WTC11 (cell line): ENCODE measurements at regions of chr4 and their contacts with region 1.

Region 1: GRCh38 chr4:188228279-188228678 is 89.0 kb downstream of the TRIML1 start:
- DNase-seq: no peak
- ATAC-seq: no peak
- H3K4me3 Mint-ChIP-seq: no peak overlapping the region
- H3K27ac Mint-ChIP-seq: no peak overlapping the region
- H3K4me1 Mint-ChIP-seq: peaks cover 6% of the 10 kb centered on the region
- H3K27me3 Mint-ChIP-seq: no peaks in the 10 kb centered on the region
- CTCF ChIP-seq: no peak

Region 2: GRCh38 chr4:188092824-188093223 is 135.5 kb before region 1 on chr4:
- CTCF ChIA-PET with region 1: no interaction called
- POLR2A ChIA-PET with region 1: interaction called, 11 read pairs
- DNase-seq: no peak
- ATAC-seq: no peak
- H3K4me3 Mint-ChIP-seq: no peak overlapping the region
- H3K27ac Mint-ChIP-seq: peak overlapping the region; percentile 32
- H3K4me1 Mint-ChIP-seq: peaks cover 4% of the 10 kb centered on the region; the same call in 1 of the 2 replicates
- H3K27me3 Mint-ChIP-seq: no peaks in the 10 kb centered on the region
- CTCF ChIP-seq: no peak